Activated B cell treated with CpG ODN at 0.5 μM for 24 hours (primary cell): ENCODE measurements at regions of chr2 and their contacts with region 1.

Region 1: DNA sequence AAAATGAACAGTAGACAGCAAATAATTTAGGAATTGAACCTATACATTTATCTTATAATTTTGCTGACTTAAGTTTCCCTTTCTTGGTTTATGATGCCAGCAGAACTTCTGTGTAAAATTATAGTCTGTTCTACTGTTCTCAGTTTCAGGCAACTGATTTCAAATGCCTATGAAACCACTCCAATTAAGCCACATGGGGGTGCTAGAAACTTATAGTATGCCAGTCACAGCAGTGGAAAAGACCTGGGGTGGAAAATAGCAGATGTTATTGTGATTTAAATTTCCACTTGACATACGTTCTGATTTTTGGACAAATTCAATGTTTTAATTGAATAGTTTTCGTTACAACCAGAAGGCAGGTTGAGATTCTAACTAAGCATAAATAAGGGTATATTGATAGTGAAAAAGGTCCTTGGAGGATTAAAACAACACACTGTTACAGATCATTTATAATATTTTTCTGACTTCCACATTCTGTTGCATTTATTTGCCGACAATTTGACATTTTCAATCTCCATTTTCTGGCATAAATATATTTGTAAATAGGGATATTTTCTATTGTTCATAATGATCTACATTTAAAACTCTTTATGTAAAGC is 61.4 kb downstream of the CPS1 start:
- DNase-seq: no peak
- ATAC-seq: no peak
- H3K4me3 Mint-ChIP-seq: no peak overlapping the region
- H3K27ac Mint-ChIP-seq: no peak overlapping the region
- H3K4me1 Mint-ChIP-seq: no peaks in the 10 kb centered on the region
- H3K27me3 Mint-ChIP-seq: peaks cover 3% of the 10 kb centered on the region
- CTCF ChIP-seq: no peak

Region 2: GRCh38 chr2:210558708-210559107 is 59.1 kb before region 1 on chr2:
- CTCF ChIA-PET with region 1: no interaction called
- POLR2A ChIA-PET with region 1: no interaction called
- intact Hi-C with region 1: no loop called
- DNase-seq: no peak
- ATAC-seq: no peak
- H3K4me3 Mint-ChIP-seq: no peak overlapping the region
- H3K27ac Mint-ChIP-seq: no peak overlapping the region
- H3K4me1 Mint-ChIP-seq: no peaks in the 10 kb centered on the region
- H3K27me3 Mint-ChIP-seq: peaks cover 2% of the 10 kb centered on the region
- CTCF ChIP-seq: no peak

Region 3: GRCh38 chr2:211157856-211158463 is 540.1 kb after region 1 on chr2:
- CTCF ChIA-PET with region 1: no interaction called
- POLR2A ChIA-PET with region 1: no interaction called
- intact Hi-C with region 1: loop called (anchors 1 kb)
- DNase-seq: peak; percentile 25
- ATAC-seq: peak; percentile 75
- H3K4me3 Mint-ChIP-seq: no peak overlapping the region
- H3K27ac Mint-ChIP-seq: no peak overlapping the region
- H3K4me1 Mint-ChIP-seq: no peaks in the 10 kb centered on the region
- H3K27me3 Mint-ChIP-seq: peaks cover 2% of the 10 kb centered on the region
- CTCF ChIP-seq: peak; percentile 82